Activated T-helper 1 cell treated with anti-CD3 and anti-CD28 coated beads, Interleukin-12 subunit alpha, Interleukin-12 subunit beta, Interleukin-2, Interleukin-4 antibody, amounts not matched to agents 30 ng/mL and 10 ng/mL and 1 ng/mL, durations not matched to agents 14 hours and 24 hours and 36 hours (primary cell): ENCODE measurements at regions of chr12 and their contacts with region 1.

Region 1: DNA sequence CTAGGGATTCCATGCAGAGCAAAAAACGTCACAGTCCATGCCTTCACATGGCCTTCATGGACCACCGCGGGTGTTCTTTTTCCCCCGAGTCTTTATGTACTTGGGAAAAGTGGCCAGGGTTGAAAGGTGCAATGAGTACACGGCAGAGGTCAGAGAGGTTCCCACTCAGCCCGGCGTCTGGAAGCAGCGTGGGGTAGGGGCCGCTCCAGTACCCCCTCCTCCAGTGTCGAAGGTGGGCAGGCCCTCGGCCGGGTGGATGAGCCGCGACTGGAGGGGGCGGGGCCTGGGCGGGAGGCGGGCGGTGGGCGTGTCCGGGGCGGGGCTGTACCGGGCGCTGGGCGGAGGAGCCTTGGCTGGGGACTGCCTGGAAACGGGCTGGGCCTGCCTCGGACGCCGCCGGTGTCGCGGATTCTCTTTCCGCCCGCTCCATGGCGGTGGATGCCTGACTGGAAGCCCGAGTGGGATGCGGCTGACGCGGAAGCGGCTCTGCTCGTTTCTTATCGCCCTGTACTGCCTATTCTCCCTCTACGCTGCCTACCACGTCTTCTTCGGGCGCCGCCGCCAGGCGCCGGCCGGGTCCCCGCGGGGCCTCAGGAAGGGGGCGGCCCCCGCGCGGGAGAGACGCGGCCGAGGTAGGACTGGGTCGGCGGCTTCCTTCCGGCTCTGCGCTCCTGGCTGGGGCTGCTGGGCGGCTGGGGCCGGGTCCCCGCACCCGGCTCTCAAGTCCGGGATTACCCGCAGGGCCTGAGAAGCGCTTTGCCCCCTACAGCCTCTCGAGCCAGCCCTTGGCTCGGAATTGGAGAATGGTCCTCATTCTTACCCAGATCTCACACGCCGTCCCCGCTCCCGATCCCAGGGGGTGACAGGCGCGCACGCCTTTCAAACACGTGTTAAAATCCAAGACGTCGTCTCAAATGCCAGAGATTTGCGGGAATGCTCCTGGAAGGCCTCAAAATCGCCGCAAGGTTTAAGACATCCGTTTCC is at the start of gene RXYLT1:
- DNase-seq: peak; percentile 75
- H3K4me3 Mint-ChIP-seq: peak within 1 kb of the TSS; percentile 95
- H3K27ac Mint-ChIP-seq: peak within 1 kb of the TSS; percentile 90
- H3K4me1 Mint-ChIP-seq: peaks cover 18% of the 10 kb centered on the region
- H3K27me3 Mint-ChIP-seq: no peaks in the 10 kb centered on the region
- total RNA-seq, gene RXYLT1: 26.5 and 27.3 TPM in 2 replicates

Region 2: DNA sequence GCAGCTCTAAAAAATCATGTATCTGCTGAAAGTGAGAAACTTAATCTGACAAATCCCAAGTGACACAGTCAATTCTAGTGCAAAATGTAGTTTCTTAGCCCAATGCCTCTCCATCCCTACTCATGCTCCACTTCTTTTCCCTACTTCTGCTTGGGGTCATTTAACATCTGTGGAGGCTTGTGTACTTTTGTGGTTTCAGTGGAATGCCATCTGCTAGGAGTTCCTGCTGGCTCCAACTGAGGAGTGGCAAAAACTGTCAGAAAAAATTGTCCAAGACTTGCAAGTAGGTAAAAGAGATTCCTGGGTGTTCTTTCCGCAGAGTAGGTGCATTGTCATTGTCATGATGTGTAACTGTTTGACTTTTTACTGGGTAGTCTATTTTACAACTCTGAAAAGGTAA is 616.2 kb before region 1 on chr12:
- intact Hi-C with region 1: no loop called
- DNase-seq: no peak
- H3K4me3 Mint-ChIP-seq: no peak overlapping the region
- H3K27ac Mint-ChIP-seq: no peak overlapping the region
- H3K4me1 Mint-ChIP-seq: no peaks in the 10 kb centered on the region
- H3K27me3 Mint-ChIP-seq: no peaks in the 10 kb centered on the region

Region 3: GRCh38 chr12:63814146-63814772 is 34.5 kb after region 1 on chr12:
- intact Hi-C with region 1: loop called (anchors 2 kb)
- DNase-seq: no peak
- H3K4me3 Mint-ChIP-seq: peak overlapping the region; percentile 40
- H3K27ac Mint-ChIP-seq: peak overlapping the region; percentile 73
- H3K4me1 Mint-ChIP-seq: peaks cover 41% of the 10 kb centered on the region
- H3K27me3 Mint-ChIP-seq: no peaks in the 10 kb centered on the region

Region 4: GRCh38 chr12:63843721-63844390 is 64.1 kb after region 1 on chr12:
- intact Hi-C with region 1: loop called (anchors 5 kb)
- DNase-seq: peak; percentile 69
- H3K4me3 Mint-ChIP-seq: peak overlapping the region; percentile 55
- H3K27ac Mint-ChIP-seq: no peak overlapping the region
- H3K4me1 Mint-ChIP-seq: peaks cover 11% of the 10 kb centered on the region
- H3K27me3 Mint-ChIP-seq: peaks cover 44% of the 10 kb centered on the region

Region 5: DNA sequence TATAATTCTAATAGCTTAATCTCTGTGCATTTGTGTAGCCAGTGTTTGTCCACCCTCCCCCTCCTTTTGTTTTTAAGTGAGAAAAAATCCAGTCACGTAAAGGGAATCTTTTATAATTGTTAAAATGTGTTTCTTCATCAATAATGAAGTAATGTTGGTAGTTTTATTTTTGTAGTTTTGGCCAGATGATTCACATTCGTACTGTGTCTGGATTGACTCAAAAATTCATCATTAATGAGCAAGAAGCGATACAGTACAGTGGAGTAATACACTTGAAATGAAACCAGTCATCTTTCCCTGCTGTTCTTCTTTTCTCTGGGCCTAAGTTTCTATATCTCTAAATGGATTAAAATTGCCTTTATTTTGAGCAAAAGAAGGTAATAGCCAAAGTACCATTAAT is 151.2 kb after region 1 on chr12:
- intact Hi-C with region 1: no loop called
- DNase-seq: no peak
- H3K4me3 Mint-ChIP-seq: no peak overlapping the region
- H3K27ac Mint-ChIP-seq: no peak overlapping the region
- H3K4me1 Mint-ChIP-seq: no peaks in the 10 kb centered on the region
- H3K27me3 Mint-ChIP-seq: peaks cover 9% of the 10 kb centered on the region

Region 6: GRCh38 chr12:63955831-63956609 is 176.2 kb after region 1 on chr12:
- intact Hi-C with region 1: no loop called
- DNase-seq: no peak
- H3K4me3 Mint-ChIP-seq: no peak overlapping the region
- H3K27ac Mint-ChIP-seq: no peak overlapping the region
- H3K4me1 Mint-ChIP-seq: no peaks in the 10 kb centered on the region
- H3K27me3 Mint-ChIP-seq: peaks cover 2% of the 10 kb centered on the region

Region 7: DNA sequence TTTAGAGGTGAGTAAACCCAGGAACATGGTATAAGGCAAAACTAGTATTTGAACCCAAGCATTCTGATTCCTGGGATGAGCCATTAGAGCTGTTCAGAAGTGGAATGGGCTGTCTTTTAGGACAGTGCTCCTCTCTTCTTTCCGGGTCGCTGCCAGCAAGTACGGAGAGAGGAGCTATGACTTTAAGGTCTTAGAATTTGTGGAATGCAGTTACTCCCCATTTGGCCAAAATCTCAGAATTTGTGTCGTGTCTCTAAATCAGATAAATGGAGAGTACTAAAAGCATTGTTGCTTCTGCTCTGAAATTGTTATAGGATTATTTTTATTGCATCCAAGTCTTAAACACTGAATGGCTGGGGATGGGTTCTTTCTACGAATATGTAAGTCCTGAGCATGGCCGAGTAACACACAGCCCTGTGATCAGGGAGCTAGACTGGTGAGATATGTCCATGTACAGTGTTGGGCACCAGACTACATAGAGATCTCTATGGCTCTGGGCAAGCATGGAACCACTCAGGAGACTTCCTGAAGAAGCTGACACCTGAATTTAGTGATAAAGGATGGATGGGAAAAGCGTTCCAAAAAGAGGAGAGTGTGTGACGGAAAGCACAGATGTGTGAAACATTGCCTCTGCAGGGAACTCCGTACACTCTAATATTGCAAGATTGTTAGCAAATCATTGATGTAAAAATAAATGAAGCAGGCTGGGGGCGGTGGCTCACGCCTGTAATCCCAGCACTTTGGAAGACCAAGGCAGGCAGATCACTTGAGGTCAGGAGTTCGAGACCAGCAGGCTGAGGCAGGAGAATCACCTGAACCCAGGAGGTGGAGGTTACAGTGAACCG is 249.4 kb after region 1 on chr12:
- intact Hi-C with region 1: no loop called
- DNase-seq: no peak
- H3K4me3 Mint-ChIP-seq: no peak overlapping the region
- H3K27ac Mint-ChIP-seq: no peak overlapping the region
- H3K4me1 Mint-ChIP-seq: no peaks in the 10 kb centered on the region
- H3K27me3 Mint-ChIP-seq: peaks cover 8% of the 10 kb centered on the region

Region 8: GRCh38 chr12:64222009-64222765 is 442.4 kb after region 1 on chr12 and contains the start of gene KICS2:
- intact Hi-C with region 1: loop called (anchors 1 kb)
- DNase-seq: peak; percentile 88
- H3K4me3 Mint-ChIP-seq: peak within 1 kb of the TSS; percentile 100
- H3K27ac Mint-ChIP-seq: peak within 1 kb of the TSS; percentile 100
- H3K4me1 Mint-ChIP-seq: peaks cover 33% of the 10 kb centered on the region
- H3K27me3 Mint-ChIP-seq: peaks cover 14% of the 10 kb centered on the region
- total RNA-seq, gene KICS2: 12.7 and 14.9 TPM in 2 replicates

Region 9: DNA sequence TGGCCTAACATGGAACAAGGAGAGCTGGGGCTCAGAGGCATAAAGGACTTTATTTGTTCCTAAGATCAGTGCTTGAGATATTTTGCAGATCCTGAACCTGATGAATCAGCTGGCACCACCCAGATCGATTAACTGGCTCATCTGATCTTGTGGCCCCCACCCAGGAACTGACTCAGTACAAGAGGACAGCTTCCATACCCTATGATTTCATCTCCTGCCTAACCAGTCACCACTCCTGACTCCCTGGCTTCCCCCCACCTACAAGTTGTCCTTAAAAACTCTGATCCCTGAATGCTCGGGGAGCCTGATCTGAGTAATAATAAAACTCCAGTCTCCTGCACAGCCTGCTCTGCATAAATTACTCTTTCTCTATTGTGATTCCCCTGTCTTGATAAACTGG is 605.7 kb after region 1 on chr12:
- intact Hi-C with region 1: loop called (anchors 1 kb)
- DNase-seq: no peak
- H3K4me3 Mint-ChIP-seq: peak overlapping the region; percentile 38
- H3K27ac Mint-ChIP-seq: peak overlapping the region; percentile 85
- H3K4me1 Mint-ChIP-seq: peaks cover 30% of the 10 kb centered on the region
- H3K27me3 Mint-ChIP-seq: peaks cover 5% of the 10 kb centered on the region